ENCODE measurements at regions of chr7 and their contacts with region 1.

Region 1: GRCh38 chr7:93178212-93178611 is 30.0 kb upstream of the SAMD9L start:
- DNase-seq: peak in 2 of 4 experiments; percentile 25 to 29
- ATAC-seq: peak; percentile 84
- H3K4me3 ChIP-seq: no peak overlapping the region
- H3K27ac ChIP-seq: no peak overlapping the region
- H3K4me1 ChIP-seq: no peaks in the 10 kb centered on the region
- H3K27me3 ChIP-seq: peaks cover 0 to 2% of the 10 kb centered on the region in 2 experiments; a peak in 1 of 5 replicates
- CTCF ChIP-seq: peak; percentile 30 to 86 (median 38); a peak in 4 of 6 replicates
- EP300 ChIP-seq: no peak
- POLR2A ChIP-seq: no peak
- RAD21 ChIP-seq: peak; percentile 69 to 75

Region 2: GRCh38 chr7:92916674-92917224 is 261.5 kb before region 1 on chr7:
- CTCF ChIA-PET with region 1: no interaction called
- POLR2A ChIA-PET with region 1: no interaction called
- in situ Hi-C with region 1: no loop called
- intact Hi-C with region 1: no loop called
- DNase-seq: no peak
- ATAC-seq: no peak
- H3K4me3 ChIP-seq: no peak overlapping the region
- H3K27ac ChIP-seq: no peak overlapping the region
- H3K4me1 ChIP-seq: peaks cover 0 to 12% of the 10 kb centered on the region in 2 experiments; a peak in 2 of 5 replicates
- H3K27me3 ChIP-seq: no peaks in the 10 kb centered on the region
- CTCF ChIP-seq: no peak
- EP300 ChIP-seq: no peak
- POLR2A ChIP-seq: no peak
- RAD21 ChIP-seq: no peak

Region 3: DNA sequence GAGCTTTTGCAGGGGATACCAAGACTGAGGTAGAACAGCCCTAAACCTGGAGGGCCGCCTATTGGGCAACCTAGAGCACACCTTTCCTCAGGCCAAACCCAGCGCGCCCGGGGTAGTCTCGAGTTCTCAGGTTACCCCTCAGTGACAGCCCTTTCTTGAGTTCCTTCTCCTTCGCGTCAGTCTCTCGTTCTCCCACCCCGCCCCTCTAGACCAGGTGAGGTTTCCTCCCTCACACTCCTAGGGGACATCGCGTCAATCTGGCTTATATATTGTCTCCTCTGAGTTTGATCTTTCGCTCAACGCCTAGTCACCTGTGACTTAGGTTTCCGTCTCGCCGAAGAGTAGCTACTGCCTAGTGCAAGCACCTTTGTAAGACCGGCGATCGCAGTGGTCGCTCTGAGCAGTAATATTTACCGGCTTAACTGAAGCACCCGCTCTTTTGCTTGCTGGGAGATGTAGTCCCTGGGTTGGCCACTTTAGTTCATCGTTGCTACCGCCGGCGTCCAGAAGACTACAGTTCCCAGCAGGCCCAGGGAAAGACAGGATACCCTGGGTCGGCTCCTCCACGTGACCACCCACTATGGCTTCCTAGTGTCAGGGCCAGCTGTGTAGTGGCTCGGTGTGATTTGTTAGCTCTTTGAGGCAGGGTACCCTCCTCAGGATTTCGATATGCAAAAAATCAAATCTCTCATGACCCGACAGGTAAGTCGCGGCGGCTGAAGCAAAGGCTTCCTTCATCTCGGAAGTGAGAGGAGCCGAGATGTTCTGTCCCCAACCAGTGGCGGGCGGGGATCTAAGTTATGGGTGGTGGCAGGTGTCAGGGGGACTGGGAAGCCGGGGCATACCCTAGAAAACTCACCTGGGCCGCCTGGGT is 53.8 kb after region 1 on chr7 and contains the start of gene VPS50:
- CTCF ChIA-PET with region 1: interaction called, 3 read pairs
- POLR2A ChIA-PET with region 1: no interaction called
- in situ Hi-C with region 1: no loop called
- intact Hi-C with region 1: loop called (anchors 1 kb)
- DNase-seq: peak; percentile 93 to 97 (median 94)
- ATAC-seq: peak; percentile 98
- H3K4me3 ChIP-seq: peak within 1 kb of the TSS; percentile 62
- H3K27ac ChIP-seq: peak within 1 kb of the TSS; percentile 66
- H3K4me1 ChIP-seq: no peaks in the 10 kb centered on the region; a peak in 3 of 5 replicates
- H3K27me3 ChIP-seq: no peaks in the 10 kb centered on the region
- CTCF ChIP-seq: peak in 1 of 3 experiments; percentile 35; a peak in 2 of 6 replicates
- EP300 ChIP-seq: no peak
- POLR2A ChIP-seq: peak; percentile 89
- RAD21 ChIP-seq: no peak; a peak in 1 of 4 replicates
- polyA plus RNA-seq, gene VPS50: 10.5 to 14.9 TPM

Region 4: DNA sequence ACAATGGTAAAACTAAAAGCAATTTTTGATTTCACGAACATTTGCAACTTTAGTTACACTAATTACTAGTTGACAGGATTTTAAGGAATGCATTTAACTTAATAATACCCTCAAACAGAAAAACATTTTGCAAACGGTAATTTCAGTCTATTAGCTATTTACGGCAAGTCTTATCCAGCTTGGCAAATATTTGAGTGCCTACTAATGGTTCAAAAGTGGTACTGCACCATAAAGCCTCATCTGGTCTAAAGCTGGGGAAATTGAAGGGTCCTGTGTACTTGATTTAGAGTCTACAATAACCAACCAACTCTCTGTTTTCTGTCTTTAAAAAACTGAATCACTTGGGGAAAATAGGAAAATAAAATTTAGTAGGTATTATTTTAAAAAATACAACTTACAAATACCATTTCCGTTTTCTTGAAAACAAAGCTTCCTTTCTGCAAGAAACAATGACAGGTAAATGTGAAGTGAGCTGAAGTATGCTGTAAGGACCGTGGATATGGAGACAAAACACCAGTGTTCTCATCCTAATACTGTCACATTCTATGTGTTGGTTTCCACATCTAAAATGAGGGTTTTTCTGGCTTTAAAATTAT is 196.2 kb after region 1 on chr7:
- CTCF ChIA-PET with region 1: interaction called, 3 read pairs
- POLR2A ChIA-PET with region 1: no interaction called
- in situ Hi-C with region 1: no loop called
- intact Hi-C with region 1: loop called (anchors 1 kb)
- DNase-seq: peak; percentile 17 to 44 (median 26)
- ATAC-seq: peak; percentile 92
- H3K4me3 ChIP-seq: no peak overlapping the region
- H3K27ac ChIP-seq: no peak overlapping the region
- H3K4me1 ChIP-seq: no peaks in the 10 kb centered on the region
- H3K27me3 ChIP-seq: no peaks in the 10 kb centered on the region
- CTCF ChIP-seq: peak; percentile 38 to 81 (median 80); a peak in 5 of 6 replicates
- EP300 ChIP-seq: no peak
- POLR2A ChIP-seq: no peak
- RAD21 ChIP-seq: peak; percentile 58 to 80

Region 5: GRCh38 chr7:93453264-93453663 is 275.1 kb after region 1 on chr7:
- CTCF ChIA-PET with region 1: no interaction called
- POLR2A ChIA-PET with region 1: no interaction called
- in situ Hi-C with region 1: no loop called
- intact Hi-C with region 1: loop called (anchors 10 kb)
- DNase-seq: no peak
- ATAC-seq: no peak
- H3K4me3 ChIP-seq: no peak overlapping the region
- H3K27ac ChIP-seq: no peak overlapping the region
- H3K4me1 ChIP-seq: no peaks in the 10 kb centered on the region
- H3K27me3 ChIP-seq: no peaks in the 10 kb centered on the region
- CTCF ChIP-seq: no peak
- EP300 ChIP-seq: no peak
- POLR2A ChIP-seq: no peak
- RAD21 ChIP-seq: no peak

Region 6: DNA sequence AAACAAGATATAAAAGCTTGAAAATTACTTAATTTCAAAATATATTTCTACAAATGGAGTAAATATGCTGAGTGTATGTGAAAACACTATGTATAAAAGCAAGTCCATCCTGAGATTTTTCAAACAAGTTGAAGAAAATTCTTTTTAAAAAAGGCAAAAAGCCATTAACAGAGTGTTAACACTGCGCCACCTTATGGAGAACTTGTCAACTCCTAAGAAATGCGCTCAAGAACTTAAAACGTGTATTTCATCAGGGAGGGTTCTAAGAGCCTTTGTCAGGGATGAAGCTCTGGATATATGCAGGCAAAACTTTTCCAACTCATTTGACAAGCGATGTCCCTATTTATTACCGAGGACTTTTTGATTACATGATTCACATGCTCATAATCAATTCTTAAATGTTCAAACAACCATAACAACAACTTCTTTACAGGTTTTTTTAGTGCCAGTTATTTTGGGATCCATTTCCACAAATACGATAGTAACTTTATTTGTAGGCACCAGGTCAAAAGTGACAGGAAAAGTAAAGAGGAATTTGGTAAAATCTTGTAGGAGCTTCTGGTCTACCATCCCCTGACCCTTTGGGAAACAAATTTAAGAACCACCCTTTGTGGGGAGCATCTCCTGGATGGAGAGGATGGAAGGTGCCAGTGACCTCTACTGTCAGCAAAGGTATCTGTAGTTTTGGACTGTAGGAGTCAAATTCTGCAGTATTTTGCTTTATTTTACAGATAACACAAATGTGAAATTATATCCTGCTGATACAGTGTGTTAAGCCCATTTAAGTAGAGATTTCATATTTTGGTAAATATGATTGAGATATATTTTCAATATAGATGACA is 373.1 kb after region 1 on chr7:
- CTCF ChIA-PET with region 1: interaction called, 3 read pairs
- POLR2A ChIA-PET with region 1: no interaction called
- in situ Hi-C with region 1: loop called (anchors 10 kb)
- intact Hi-C with region 1: loop called (anchors 1 kb)
- DNase-seq: peak in 3 of 4 experiments; percentile 15 to 62 (median 25)
- ATAC-seq: peak; percentile 91
- H3K4me3 ChIP-seq: no peak overlapping the region
- H3K27ac ChIP-seq: no peak overlapping the region
- H3K4me1 ChIP-seq: no peaks in the 10 kb centered on the region
- H3K27me3 ChIP-seq: 0 out of 5 replicates have a peak, but pooled peaks cover 3 to 4% of the 10 kb centered on the region in 2 experiments
- CTCF ChIP-seq: peak; percentile 56 to 73 (median 61); a peak in 5 of 6 replicates
- EP300 ChIP-seq: no peak
- POLR2A ChIP-seq: no peak
- RAD21 ChIP-seq: peak; percentile 56 to 69

Measured in K562 (cell line).